Natural killer cell (primary cell): ENCODE measurements at regions of chr20 and their contacts with region 1.

Region 1: GRCh38 chr20:37990571-37991151 is 42.6 kb downstream of the TTI1 start:
- DNase-seq: peak; percentile 61 to 77
- ATAC-seq: peak; percentile 85 to 96 (median 91)
- H3K4me3 ChIP-seq: no peak overlapping the region
- H3K4me3 Mint-ChIP-seq: peak overlapping the region; percentile 77
- H3K27ac ChIP-seq: peak overlapping the region; percentile 90
- H3K27ac Mint-ChIP-seq: peak overlapping the region; percentile 92 to 98
- H3K4me1 ChIP-seq: peaks cover 32% of the 10 kb centered on the region
- H3K4me1 Mint-ChIP-seq: peaks cover 26 to 31% of the 10 kb centered on the region in 2 donors
- H3K27me3 ChIP-seq: no peaks in the 10 kb centered on the region
- H3K27me3 Mint-ChIP-seq: no peaks in the 10 kb centered on the region
- CTCF ChIP-seq: no peak

Region 2: DNA sequence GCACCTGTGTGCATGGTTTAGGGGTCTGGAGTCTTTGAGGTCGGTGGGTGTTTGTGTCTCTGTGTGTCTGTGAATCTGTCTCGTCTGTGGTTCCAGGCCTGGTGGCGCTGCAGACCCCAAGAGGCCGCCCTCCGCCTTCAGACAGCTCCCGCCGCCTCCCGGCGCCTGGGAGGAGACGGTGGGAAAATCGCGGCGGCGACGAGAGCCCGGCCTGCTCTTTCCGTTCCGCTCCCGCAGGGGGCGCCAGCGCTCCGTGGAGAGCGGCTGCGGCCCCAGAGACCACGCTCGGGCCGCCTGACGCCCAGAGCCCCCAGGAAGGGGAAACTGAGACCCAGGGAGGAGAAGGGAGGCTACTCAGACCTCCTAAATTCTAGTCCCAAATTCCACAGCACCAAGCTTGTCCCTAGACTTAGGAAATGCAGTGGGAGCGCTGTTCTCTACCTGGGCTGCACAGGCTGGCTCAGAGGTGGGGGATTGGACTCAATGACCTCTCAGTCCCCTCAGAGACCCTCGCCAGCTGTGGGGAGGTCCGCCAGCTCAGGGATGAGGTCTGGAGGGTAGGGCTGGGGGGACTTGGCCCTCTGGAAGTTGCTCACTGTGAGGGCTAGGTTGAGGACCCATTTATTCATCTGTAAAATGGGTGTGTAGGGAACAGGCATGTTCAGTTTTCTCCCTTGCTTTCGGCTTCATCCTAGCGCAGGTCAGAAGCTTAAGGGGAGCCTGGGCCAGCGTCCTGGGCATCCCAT is 426.1 kb before region 1 on chr20:
- intact Hi-C with region 1: loop called (anchors 1 kb)
- DNase-seq: peak; percentile 35 to 58
- ATAC-seq: peak; percentile 63 to 72 (median 71)
- H3K4me3 ChIP-seq: no peak overlapping the region
- H3K4me3 Mint-ChIP-seq: no peak overlapping the region
- H3K27ac ChIP-seq: no peak overlapping the region
- H3K27ac Mint-ChIP-seq: no peak overlapping the region
- H3K4me1 ChIP-seq: peaks cover 6% of the 10 kb centered on the region
- H3K4me1 Mint-ChIP-seq: no peaks in the 10 kb centered on the region
- H3K27me3 ChIP-seq: peaks cover 21% of the 10 kb centered on the region
- H3K27me3 Mint-ChIP-seq: peaks cover 21 to 47% of the 10 kb centered on the region in 2 donors
- CTCF ChIP-seq: peak; percentile 87

Region 3: DNA sequence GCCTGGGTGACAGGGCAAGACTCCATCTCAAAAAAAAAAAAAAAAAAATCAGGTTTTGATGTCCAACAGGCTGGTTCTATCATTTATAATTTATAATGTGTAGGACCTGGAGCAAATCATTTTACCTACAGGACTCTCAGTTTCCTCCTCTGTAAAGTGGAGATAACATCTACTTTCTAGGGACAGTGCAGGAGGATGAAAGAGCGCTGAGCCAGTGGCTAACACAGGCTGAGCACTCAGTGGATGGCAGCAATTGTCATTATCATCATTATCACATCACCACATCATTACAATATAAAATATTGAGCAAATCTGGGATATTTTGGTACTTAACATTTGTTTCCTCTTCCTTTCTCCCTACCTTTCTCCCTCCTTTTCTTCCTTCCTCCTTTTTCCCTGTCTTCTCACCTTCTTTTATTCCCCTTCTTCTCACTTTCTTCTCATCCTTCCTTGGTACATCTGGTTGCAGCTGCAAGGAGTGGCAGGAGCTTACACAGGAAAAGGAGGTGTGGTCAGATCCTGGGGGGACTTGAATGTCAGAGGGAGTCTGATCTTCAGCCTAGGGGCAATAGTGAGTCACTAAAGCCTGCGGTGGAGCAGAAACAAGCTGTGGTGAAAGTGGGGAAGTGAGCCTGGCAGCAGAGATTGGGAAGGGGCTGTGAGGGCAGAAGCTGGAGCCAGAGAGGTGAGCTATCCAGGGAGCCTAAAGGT is 321.4 kb before region 1 on chr20:
- intact Hi-C with region 1: no loop called
- DNase-seq: no peak
- ATAC-seq: no peak
- H3K4me3 ChIP-seq: no peak overlapping the region
- H3K4me3 Mint-ChIP-seq: no peak overlapping the region
- H3K27ac ChIP-seq: no peak overlapping the region
- H3K27ac Mint-ChIP-seq: no peak overlapping the region
- H3K4me1 ChIP-seq: no peaks in the 10 kb centered on the region
- H3K4me1 Mint-ChIP-seq: no peaks in the 10 kb centered on the region
- H3K27me3 ChIP-seq: peaks cover 2% of the 10 kb centered on the region
- H3K27me3 Mint-ChIP-seq: peaks cover 27 to 50% of the 10 kb centered on the region in 2 donors
- CTCF ChIP-seq: no peak

Region 4: GRCh38 chr20:37693635-37694626 is 296.7 kb before region 1 on chr20 and contains the start of gene CTNNBL1:
- intact Hi-C with region 1: loop called (anchors 2 kb)
- DNase-seq: peak; percentile 94 to 97
- ATAC-seq: peak; percentile 97 to 99 (median 98)
- H3K4me3 ChIP-seq: peak within 1 kb of the TSS; percentile 77
- H3K4me3 Mint-ChIP-seq: peak within 1 kb of the TSS; percentile 98
- H3K27ac ChIP-seq: peak within 1 kb of the TSS; percentile 64
- H3K27ac Mint-ChIP-seq: peak within 1 kb of the TSS; percentile 90 to 94
- H3K4me1 ChIP-seq: peaks cover 14% of the 10 kb centered on the region
- H3K4me1 Mint-ChIP-seq: peaks cover 26 to 40% of the 10 kb centered on the region in 2 donors
- H3K27me3 ChIP-seq: no peaks in the 10 kb centered on the region
- H3K27me3 Mint-ChIP-seq: peaks cover 12 to 20% of the 10 kb centered on the region in 2 donors
- CTCF ChIP-seq: no peak
- total RNA-seq, gene CTNNBL1: 59.1 to 75.6 (median 67.6) TPM

Region 5: GRCh38 chr20:37914672-37915433 is 75.8 kb before region 1 on chr20:
- intact Hi-C with region 1: loop called (anchors 5 kb)
- DNase-seq: peak; percentile 38 to 45
- ATAC-seq: peak; percentile 69 to 78 (median 74)
- H3K4me3 ChIP-seq: peak overlapping the region; percentile 13
- H3K4me3 Mint-ChIP-seq: peak overlapping the region; percentile 49
- H3K27ac ChIP-seq: no peak overlapping the region
- H3K27ac Mint-ChIP-seq: peak overlapping the region; percentile 62 to 88
- H3K4me1 ChIP-seq: peaks cover 13% of the 10 kb centered on the region
- H3K4me1 Mint-ChIP-seq: peaks cover 19 to 53% of the 10 kb centered on the region in 2 donors
- H3K27me3 ChIP-seq: peaks cover 12% of the 10 kb centered on the region
- H3K27me3 Mint-ChIP-seq: peaks cover 22 to 42% of the 10 kb centered on the region in 2 donors
- CTCF ChIP-seq: no peak

Region 6: DNA sequence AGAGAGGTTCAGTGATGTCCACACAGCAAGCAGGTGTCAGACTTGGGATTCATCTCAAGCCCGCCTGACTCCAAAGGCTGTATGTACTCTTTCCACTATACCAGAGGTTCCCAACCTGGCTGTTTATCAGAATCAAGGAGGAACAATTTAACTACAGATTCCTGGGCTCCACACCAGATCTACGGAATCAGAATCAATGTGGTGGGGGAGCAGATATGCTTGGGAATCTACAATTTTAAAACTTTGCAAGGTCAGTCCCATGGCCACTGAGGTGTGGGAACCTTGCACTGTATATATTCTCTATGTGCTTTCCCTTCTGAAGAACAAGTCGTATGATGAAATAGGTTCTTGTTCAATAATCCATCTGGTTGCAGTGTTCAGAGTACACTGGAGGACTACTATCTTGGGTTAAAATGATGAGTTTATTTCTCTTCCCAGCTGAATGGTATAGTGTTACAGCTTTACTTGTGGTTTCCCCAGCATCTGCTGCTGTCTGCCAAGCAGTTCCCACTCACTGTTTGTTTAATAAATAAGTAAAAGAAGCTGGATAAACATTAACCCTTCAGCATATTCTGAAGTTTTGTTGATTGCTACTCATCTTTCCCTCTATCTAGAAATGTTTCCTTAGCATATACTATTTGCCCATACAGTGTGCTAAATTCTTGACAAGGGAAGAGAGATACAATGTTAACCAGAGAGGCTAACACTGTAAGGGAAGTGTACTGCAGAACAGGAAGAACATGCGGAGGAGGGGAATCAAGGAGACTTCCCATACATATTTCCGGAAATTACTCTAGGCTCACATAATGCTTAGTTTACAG is 32.7 kb after region 1 on chr20:
- intact Hi-C with region 1: no loop called
- DNase-seq: no peak
- ATAC-seq: no peak
- H3K4me3 ChIP-seq: no peak overlapping the region
- H3K4me3 Mint-ChIP-seq: no peak overlapping the region
- H3K27ac ChIP-seq: no peak overlapping the region
- H3K27ac Mint-ChIP-seq: peak overlapping the region in 1 of 2 donors; percentile 58
- H3K4me1 ChIP-seq: no peaks in the 10 kb centered on the region
- H3K4me1 Mint-ChIP-seq: peaks cover 22 to 43% of the 10 kb centered on the region in 2 donors
- H3K27me3 ChIP-seq: no peaks in the 10 kb centered on the region
- H3K27me3 Mint-ChIP-seq: no peaks in the 10 kb centered on the region
- CTCF ChIP-seq: no peak

Region 7: DNA sequence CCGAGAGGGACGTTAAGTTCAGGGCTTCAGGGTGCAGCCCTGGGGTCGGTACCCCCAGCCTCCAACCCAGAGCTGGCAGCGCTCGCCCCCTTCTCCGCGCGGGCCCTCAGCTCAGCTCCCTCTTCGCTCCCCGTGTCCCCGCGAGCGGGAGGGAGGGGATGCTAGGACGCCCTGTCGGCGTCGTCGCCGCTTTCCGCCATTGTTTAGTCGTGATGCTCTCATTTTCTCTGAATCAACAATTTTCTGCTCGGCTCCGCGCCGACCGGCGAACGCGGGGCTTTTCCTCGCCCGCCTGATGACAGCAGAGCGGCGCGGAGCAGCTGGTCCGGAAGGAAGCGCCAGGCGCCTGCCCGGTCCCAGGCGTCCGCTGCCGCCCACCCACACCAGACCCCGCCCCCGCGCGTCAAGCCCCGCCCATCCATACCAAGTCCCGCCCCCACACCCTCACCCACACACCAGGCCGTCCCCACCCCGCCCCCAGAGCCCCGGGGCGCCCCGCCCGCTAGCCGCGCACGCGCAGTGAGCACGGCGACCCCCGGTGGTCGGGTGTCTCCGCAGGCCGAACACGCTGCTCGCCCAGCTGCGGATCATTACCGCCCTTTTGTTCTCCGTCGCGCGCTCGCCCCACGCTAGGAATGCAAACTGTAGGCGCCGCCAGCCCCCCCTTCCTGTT is 683.6 kb after region 1 on chr20:
- intact Hi-C with region 1: no loop called
- DNase-seq: peak; percentile 61 to 78
- ATAC-seq: peak; percentile 93 to 95 (median 94)
- H3K4me3 ChIP-seq: peak overlapping the region; percentile 76
- H3K4me3 Mint-ChIP-seq: peak overlapping the region; percentile 90
- H3K27ac ChIP-seq: peak overlapping the region; percentile 43
- H3K27ac Mint-ChIP-seq: peak overlapping the region; percentile 61 to 88
- H3K4me1 ChIP-seq: peaks cover 16% of the 10 kb centered on the region
- H3K4me1 Mint-ChIP-seq: peaks cover 5 to 17% of the 10 kb centered on the region in 2 donors
- H3K27me3 ChIP-seq: peaks cover 8% of the 10 kb centered on the region
- H3K27me3 Mint-ChIP-seq: peaks cover 9 to 14% of the 10 kb centered on the region in 2 donors
- CTCF ChIP-seq: no peak